Adrenal gland (tissue), 19 donors: ENCODE measurements at regions of chr6 and their contacts with region 1.

Region 1: DNA sequence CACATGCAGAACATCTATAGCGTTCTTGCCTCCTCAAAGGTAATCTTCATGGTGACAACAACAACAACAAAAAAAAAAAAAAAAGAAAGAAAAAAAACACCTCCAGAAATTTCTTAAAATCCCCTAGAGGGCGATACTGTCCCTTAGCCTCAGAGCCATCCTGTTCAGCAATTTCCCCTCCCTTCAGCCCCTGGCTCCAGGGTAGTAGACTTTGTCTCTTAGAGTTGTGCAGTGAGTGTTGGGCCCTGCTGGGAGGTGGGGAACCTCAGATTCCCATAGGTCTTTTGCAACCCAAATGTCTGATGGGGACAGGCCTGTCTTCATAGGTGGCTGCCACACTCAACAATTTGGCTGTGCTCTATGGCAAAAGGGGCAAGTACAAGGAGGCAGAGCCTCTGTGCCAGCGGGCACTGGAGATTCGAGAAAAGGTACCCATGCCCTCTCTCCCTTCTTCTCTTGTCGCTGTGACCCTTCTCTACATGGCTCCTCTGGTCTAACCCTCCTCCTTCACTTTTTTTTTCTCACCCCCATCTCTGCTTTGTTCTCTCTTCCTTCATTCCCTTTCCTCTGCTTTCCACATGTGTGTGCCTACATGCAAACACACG is 6.0 kb upstream of the PTK7 start:
- DNase-seq: no peak
- H3K4me3 ChIP-seq: no peak overlapping the region
- H3K27ac ChIP-seq: no peak overlapping the region
- H3K4me1 ChIP-seq: no peaks in the 10 kb centered on the region
- H3K27me3 ChIP-seq: no peaks in the 10 kb centered on the region
- CTCF ChIP-seq: peak; percentile 25 to 53 (median 40)
- POLR2A ChIP-seq: no peak

Region 2: GRCh38 chr6:42661540-42662153 is 408.5 kb before region 1 on chr6:
- intact Hi-C with region 1: no loop called
- DNase-seq: peak; percentile 74 to 96 (median 84)
- H3K4me3 ChIP-seq: no peak overlapping the region
- H3K27ac ChIP-seq: no peak overlapping the region
- H3K4me1 ChIP-seq: peaks cover 0 to 11% of the 10 kb centered on the region in 2 donors
- H3K27me3 ChIP-seq: no peaks in the 10 kb centered on the region
- CTCF ChIP-seq: peak; percentile 84 to 96 (median 91)
- POLR2A ChIP-seq: no peak

Region 3: DNA sequence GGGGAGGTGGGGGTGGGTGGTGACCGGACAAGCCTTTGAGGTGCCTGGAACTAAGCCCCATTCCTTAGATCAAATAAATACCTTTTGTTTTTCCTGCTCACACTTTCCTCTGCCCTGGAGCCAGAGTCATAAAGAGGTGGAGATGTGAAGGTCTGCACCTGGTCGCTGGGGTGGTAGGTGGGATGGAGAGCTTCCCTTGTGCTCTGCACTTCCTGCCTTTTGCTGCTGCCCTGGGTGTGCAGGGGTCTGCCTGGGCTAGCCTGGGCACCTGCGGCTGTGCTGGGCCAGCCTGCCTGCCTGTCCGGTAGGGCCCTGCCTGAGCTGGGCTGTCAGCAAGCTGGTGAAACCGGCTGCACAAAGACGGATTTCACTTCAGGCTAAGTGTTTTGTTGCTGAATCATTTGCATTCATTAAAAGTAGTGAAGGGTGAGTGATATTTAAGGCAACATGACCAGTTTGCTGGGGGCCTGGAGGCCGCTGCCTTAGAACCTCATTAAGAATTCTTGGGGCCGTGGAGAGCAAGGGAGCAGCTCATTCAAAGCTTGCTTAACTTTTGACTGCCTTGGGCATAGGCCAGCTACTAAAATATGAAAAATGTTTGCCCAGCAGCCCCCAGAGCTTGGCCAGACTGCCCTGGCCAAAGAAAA is 26.4 kb after region 1 on chr6:
- intact Hi-C with region 1: no loop called
- DNase-seq: peak in 2 of 7 donors; percentile 13 to 57
- H3K4me3 ChIP-seq: no peak overlapping the region
- H3K27ac ChIP-seq: peak overlapping the region in 2 of 5 donors; percentile 17 to 45
- H3K4me1 ChIP-seq: peaks cover 0 to 7% of the 10 kb centered on the region in 2 donors
- H3K27me3 ChIP-seq: no peaks in the 10 kb centered on the region
- CTCF ChIP-seq: no peak
- POLR2A ChIP-seq: no peak

Region 4: GRCh38 chr6:43149265-43149664 is 79.1 kb after region 1 on chr6:
- intact Hi-C with region 1: loop called in 1 of 2 experiments (anchors 5 kb)
- DNase-seq: no peak
- H3K4me3 ChIP-seq: no peak overlapping the region
- H3K27ac ChIP-seq: no peak overlapping the region
- H3K4me1 ChIP-seq: no peaks in the 10 kb centered on the region
- H3K27me3 ChIP-seq: no peaks in the 10 kb centered on the region
- CTCF ChIP-seq: no peak
- POLR2A ChIP-seq: no peak